Heart right ventricle (tissue), 16 donors: ENCODE measurements at regions of chr10 and their contacts with region 1.

Region 1: GRCh38 chr10:24209946-24210491 is 1.1 kb downstream of the KIAA1217 start:
- DNase-seq: peak; percentile 28 to 30
- ATAC-seq: peak in 7 of 8 donors; percentile 11 to 43 (median 31)
- H3K4me3 ChIP-seq: peak overlapping the region; percentile 37 to 74 (median 63)
- H3K27ac ChIP-seq: peak overlapping the region; percentile 77 to 96 (median 92)
- H3K4me1 ChIP-seq: peaks cover 9 to 87% (median 44%) of the 10 kb centered on the region in 9 donors
- H3K27me3 ChIP-seq: peaks cover 0 to 22% (median 0%) of the 10 kb centered on the region in 7 donors
- CTCF ChIP-seq: no peak

Region 2: GRCh38 chr10:24292304-24293293 is 82.6 kb after region 1 on chr10:
- intact Hi-C with region 1: loop called in 1 of 10 experiments (anchors 5 kb)
- DNase-seq: no peak
- ATAC-seq: no peak
- H3K4me3 ChIP-seq: no peak overlapping the region
- H3K27ac ChIP-seq: peak overlapping the region in 8 of 10 donors; percentile 34 to 73 (median 69)
- H3K4me1 ChIP-seq: peaks cover 4 to 42% (median 29%) of the 10 kb centered on the region in 9 donors
- H3K27me3 ChIP-seq: no peaks in the 10 kb centered on the region
- CTCF ChIP-seq: no peak

Region 3: GRCh38 chr10:24344279-24344678 is 134.3 kb after region 1 on chr10:
- intact Hi-C with region 1: loop called in 1 of 10 experiments (anchors 10 kb)
- DNase-seq: no peak
- ATAC-seq: peak in 2 of 8 donors; percentile 18 to 74
- H3K4me3 ChIP-seq: no peak overlapping the region
- H3K27ac ChIP-seq: peak overlapping the region in 7 of 10 donors; percentile 11 to 51 (median 33)
- H3K4me1 ChIP-seq: peaks cover 4 to 71% (median 36%) of the 10 kb centered on the region in 9 donors
- H3K27me3 ChIP-seq: no peaks in the 10 kb centered on the region
- CTCF ChIP-seq: no peak

Region 4: GRCh38 chr10:24374134-24374915 is 164.3 kb after region 1 on chr10:
- intact Hi-C with region 1: loop called in 2 of 10 experiments (anchors 10 kb)
- DNase-seq: no peak
- ATAC-seq: no peak
- H3K4me3 ChIP-seq: no peak overlapping the region
- H3K27ac ChIP-seq: no peak overlapping the region
- H3K4me1 ChIP-seq: peaks cover 0 to 18% (median 6%) of the 10 kb centered on the region in 9 donors
- H3K27me3 ChIP-seq: no peaks in the 10 kb centered on the region
- CTCF ChIP-seq: no peak

Region 5: DNA sequence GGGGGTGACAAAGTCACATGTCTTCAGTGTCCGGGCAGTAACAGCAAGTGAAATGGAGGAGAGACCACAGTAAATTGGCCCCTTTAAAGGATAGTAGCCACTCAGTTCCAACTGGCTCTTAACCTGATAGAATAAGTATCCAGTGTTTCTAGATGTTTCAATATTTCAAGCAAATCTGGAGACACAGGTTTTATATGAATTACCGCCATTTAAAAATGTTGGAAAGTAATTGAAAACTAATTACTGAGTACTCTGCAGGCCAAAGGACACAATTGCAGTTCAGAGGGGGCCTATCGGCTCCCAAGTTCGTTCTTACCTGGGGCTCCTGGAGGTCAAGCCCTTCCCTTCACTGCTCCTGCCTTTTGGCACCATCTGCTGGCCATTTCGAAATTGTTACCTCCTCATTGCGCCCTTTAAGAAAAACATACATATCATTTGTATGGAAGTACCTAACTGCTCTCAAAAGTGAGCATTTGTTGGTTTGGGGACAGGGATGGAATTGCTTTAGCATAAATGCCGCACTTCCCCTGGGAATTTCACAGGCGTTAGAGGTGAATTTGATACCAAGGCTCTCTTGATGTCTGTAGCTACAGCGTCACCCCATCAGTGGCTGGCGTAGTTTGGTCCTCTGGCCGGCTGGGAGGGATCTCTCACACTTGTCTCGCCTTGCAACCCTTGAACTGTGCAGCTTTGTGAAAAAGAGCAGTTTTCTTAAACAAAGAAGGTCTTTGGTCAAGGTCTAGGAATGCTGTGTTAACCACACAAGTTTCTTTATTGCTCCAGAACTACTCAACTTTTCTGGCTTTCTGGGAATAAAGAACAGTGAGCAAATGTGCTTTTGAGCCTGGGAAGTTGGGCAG is 293.7 kb after region 1 on chr10:
- intact Hi-C with region 1: loop called in 1 of 10 experiments (anchors 5 kb)
- DNase-seq: peak in 1 of 2 donors; percentile 16
- ATAC-seq: peak in 3 of 8 donors; percentile 29 to 64 (median 52)
- H3K4me3 ChIP-seq: no peak overlapping the region
- H3K27ac ChIP-seq: no peak overlapping the region
- H3K4me1 ChIP-seq: peaks cover 0 to 10% (median 0%) of the 10 kb centered on the region in 9 donors
- H3K27me3 ChIP-seq: no peaks in the 10 kb centered on the region
- CTCF ChIP-seq: peak; percentile 27 to 73 (median 62)

Region 6: GRCh38 chr10:24518981-24519597 is 309.1 kb after region 1 on chr10:
- intact Hi-C with region 1: loop called in 2 of 10 experiments (anchors 10 kb)
- DNase-seq: peak; percentile 18 to 75
- ATAC-seq: peak; percentile 21 to 77 (median 68)
- H3K4me3 ChIP-seq: no peak overlapping the region
- H3K27ac ChIP-seq: peak overlapping the region in 2 of 10 donors; percentile 2 to 10
- H3K4me1 ChIP-seq: peaks cover 0 to 11% (median 6%) of the 10 kb centered on the region in 9 donors
- H3K27me3 ChIP-seq: no peaks in the 10 kb centered on the region
- CTCF ChIP-seq: peak; percentile 69 to 85 (median 75)